ENCODE measurements at regions of chr21 and their contacts with region 1.

Region 1: GRCh38 chr21:29195981-29196669 is 65.7 kb downstream of the MAP3K7CL start:
- DNase-seq: peak in 8 of 9 experiments; percentile 31 to 82 (median 54)
- ATAC-seq: peak; percentile 97
- H3K4me3 ChIP-seq: peak overlapping the region in 1 of 2 experiments; percentile 14
- H3K4me3 Mint-ChIP-seq: peak overlapping the region; percentile 59
- H3K27ac ChIP-seq: no peak overlapping the region
- H3K27ac Mint-ChIP-seq: peak overlapping the region; percentile 67
- H3K4me1 ChIP-seq: peaks cover 4% of the 10 kb centered on the region
- H3K4me1 Mint-ChIP-seq: peaks cover 16% of the 10 kb centered on the region
- H3K27me3 ChIP-seq: no peaks in the 10 kb centered on the region
- H3K27me3 Mint-ChIP-seq: peaks cover 2% of the 10 kb centered on the region
- CTCF ChIP-seq: peak; percentile 24

Region 2: GRCh38 chr21:29078869-29079767 is 117.0 kb before region 1 on chr21:
- CTCF ChIA-PET with region 1: no interaction called
- POLR2A ChIA-PET with region 1: no interaction called
- intact Hi-C with region 1: loop called in 1 of 2 experiments (anchors 5 kb)
- DNase-seq: peak in 6 of 9 experiments; percentile 21 to 72 (median 47)
- ATAC-seq: peak; percentile 18
- H3K4me3 ChIP-seq: peak overlapping the region in 1 of 2 experiments; percentile 8
- H3K4me3 Mint-ChIP-seq: peak overlapping the region; percentile 49
- H3K27ac ChIP-seq: peak overlapping the region; percentile 31 to 68
- H3K27ac Mint-ChIP-seq: peak overlapping the region; percentile 93
- H3K4me1 ChIP-seq: peaks cover 54% of the 10 kb centered on the region
- H3K4me1 Mint-ChIP-seq: peaks cover 66% of the 10 kb centered on the region
- H3K27me3 ChIP-seq: no peaks in the 10 kb centered on the region
- H3K27me3 Mint-ChIP-seq: no peaks in the 10 kb centered on the region
- CTCF ChIP-seq: no peak

Region 3: GRCh38 chr21:29114765-29115164 is 81.4 kb before region 1 on chr21:
- CTCF ChIA-PET with region 1: no interaction called
- POLR2A ChIA-PET with region 1: no interaction called
- intact Hi-C with region 1: no loop called
- DNase-seq: no peak
- ATAC-seq: no peak
- H3K4me3 ChIP-seq: no peak overlapping the region
- H3K4me3 Mint-ChIP-seq: no peak overlapping the region
- H3K27ac ChIP-seq: no peak overlapping the region
- H3K27ac Mint-ChIP-seq: no peak overlapping the region
- H3K4me1 ChIP-seq: no peaks in the 10 kb centered on the region
- H3K4me1 Mint-ChIP-seq: no peaks in the 10 kb centered on the region
- H3K27me3 ChIP-seq: no peaks in the 10 kb centered on the region
- H3K27me3 Mint-ChIP-seq: no peaks in the 10 kb centered on the region
- CTCF ChIP-seq: no peak

Region 4: GRCh38 chr21:29208682-29209059 is 12.5 kb after region 1 on chr21:
- CTCF ChIA-PET with region 1: no interaction called
- POLR2A ChIA-PET with region 1: no interaction called
- intact Hi-C with region 1: no loop called
- DNase-seq: peak in 1 of 9 experiments; percentile 5
- ATAC-seq: no peak
- H3K4me3 ChIP-seq: no peak overlapping the region
- H3K4me3 Mint-ChIP-seq: no peak overlapping the region
- H3K27ac ChIP-seq: no peak overlapping the region
- H3K27ac Mint-ChIP-seq: no peak overlapping the region
- H3K4me1 ChIP-seq: no peaks in the 10 kb centered on the region
- H3K4me1 Mint-ChIP-seq: no peaks in the 10 kb centered on the region
- H3K27me3 ChIP-seq: peaks cover 0 to 4% of the 10 kb centered on the region in 2 experiments
- H3K27me3 Mint-ChIP-seq: peaks cover 2% of the 10 kb centered on the region
- CTCF ChIP-seq: no peak

Region 5: DNA sequence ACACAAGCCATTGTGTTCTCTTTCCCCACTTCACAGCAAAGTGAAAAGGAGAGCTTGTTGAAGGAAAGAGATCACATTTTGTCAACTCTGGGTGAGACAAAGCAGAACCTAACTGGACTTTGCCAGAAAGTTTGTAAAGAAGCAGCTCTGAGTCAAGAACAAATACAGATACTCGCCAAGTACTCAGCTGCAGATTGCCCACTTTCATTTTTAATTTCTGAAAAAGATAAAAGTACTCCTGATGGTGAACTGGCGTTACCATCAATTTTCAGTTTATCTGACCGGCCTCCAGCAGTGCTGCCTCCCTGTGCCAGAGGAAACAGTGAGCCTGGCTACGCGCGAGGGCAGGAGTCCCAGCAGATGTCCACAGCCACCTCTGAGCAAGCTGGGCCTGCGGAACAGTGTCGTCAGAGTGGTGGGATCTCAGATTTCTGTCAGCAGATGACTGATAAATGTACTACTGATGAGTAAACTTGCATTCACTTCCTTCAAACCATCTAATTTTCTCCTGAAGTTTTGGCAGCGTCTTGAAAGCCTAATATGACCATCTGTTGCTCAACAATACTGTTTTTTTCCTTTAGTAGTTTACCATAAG is 146.3 kb after region 1 on chr21:
- CTCF ChIA-PET with region 1: no interaction called
- POLR2A ChIA-PET with region 1: no interaction called
- intact Hi-C with region 1: loop called in 1 of 2 experiments (anchors 10 kb)
- DNase-seq: no peak
- ATAC-seq: no peak
- H3K4me3 ChIP-seq: no peak overlapping the region
- H3K4me3 Mint-ChIP-seq: no peak overlapping the region
- H3K27ac ChIP-seq: no peak overlapping the region
- H3K27ac Mint-ChIP-seq: no peak overlapping the region
- H3K4me1 ChIP-seq: no peaks in the 10 kb centered on the region
- H3K4me1 Mint-ChIP-seq: peaks cover 11% of the 10 kb centered on the region
- H3K27me3 ChIP-seq: no peaks in the 10 kb centered on the region
- H3K27me3 Mint-ChIP-seq: no peaks in the 10 kb centered on the region
- CTCF ChIP-seq: no peak

Measured in CD8-positive, alpha-beta T cell (primary cell).